MCF 10A (cell line): ENCODE measurements at regions of chr10 and their contacts with region 1.

Region 1: DNA sequence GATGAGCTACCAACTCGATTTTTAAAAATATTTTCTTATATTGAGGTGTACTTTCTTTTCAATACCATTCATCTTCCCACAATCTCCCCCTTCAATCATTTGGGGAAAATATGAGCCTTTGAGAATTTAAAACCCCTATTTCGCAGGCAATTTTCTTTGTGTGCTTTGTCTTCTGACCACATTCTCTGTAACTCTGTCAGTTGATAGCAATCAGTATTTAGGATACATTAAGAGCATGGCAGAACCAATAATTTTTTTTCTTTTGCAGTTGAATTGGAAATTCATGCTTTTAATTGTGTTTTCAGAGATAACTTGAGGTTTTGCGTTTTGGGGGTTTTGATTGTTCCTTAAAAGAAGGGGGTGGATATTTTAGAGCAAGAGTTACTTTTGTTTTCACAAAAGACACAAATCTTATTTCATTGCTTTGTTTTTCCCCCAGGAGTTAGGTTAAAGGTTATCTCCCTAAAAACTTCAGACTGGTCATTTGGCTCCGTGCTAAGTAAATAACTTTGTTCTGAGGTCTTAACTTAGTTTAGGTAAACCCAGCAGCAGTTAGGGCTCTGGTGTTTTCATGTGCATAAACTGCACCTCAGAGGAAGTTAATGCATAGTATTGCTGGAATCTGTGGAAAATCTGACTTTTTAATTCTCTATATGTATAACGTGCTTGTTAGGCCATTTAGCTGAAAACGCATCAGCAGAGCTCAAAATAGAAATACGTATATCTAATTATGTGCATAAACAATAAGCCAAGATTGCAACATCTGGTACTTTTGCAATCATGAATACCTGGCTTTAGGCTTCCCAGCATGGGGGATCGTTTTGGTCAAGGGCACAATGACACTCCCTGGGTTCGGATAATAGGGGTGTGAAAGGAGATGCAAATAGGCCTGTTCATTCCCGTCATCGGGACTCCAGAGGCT is 676.4 kb upstream of the ANKRD30A start:
- DNase-seq: peak; percentile 72
- H3K4me3 Mint-ChIP-seq: no peak overlapping the region
- H3K27ac Mint-ChIP-seq: peak overlapping the region; percentile 64
- H3K4me1 Mint-ChIP-seq: peaks cover 18% of the 10 kb centered on the region
- H3K27me3 Mint-ChIP-seq: no peaks in the 10 kb centered on the region
- CTCF ChIP-seq: no peak

Region 2: DNA sequence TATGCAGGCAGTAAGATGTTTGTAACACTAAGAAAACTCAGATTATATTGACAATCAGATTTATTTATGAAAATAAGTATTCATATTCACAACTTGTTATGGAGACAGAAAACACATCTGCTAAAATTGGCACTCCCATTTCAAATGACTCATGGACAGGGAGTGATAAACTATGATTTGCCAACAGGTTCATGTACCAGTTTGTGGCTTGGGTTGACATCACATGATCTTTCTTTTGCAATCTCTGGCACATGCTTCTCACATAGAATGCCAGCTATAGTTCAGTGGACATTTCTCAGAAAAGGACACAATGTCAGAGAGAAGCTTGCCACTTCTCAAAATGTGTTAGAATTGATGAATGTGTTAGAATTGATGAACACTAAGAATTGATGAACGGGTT is 13.2 kb after region 1 on chr10:
- CTCF ChIA-PET with region 1: interaction called, 4 read pairs
- POLR2A ChIA-PET with region 1: interaction called, 10 read pairs
- intact Hi-C with region 1: no loop called
- DNase-seq: peak; percentile 92
- H3K4me3 Mint-ChIP-seq: no peak overlapping the region
- H3K27ac Mint-ChIP-seq: peak overlapping the region; percentile 74
- H3K4me1 Mint-ChIP-seq: peaks cover 49% of the 10 kb centered on the region
- H3K27me3 Mint-ChIP-seq: no peaks in the 10 kb centered on the region
- CTCF ChIP-seq: no peak